ENCODE measurements at regions of chr9 and their contacts with region 1.

Region 1: GRCh38 chr9:86948074-86948929 is 996 bp upstream of the GAS1 start:
- DNase-seq: peak; percentile 82
- ATAC-seq: peak; percentile 38
- H3K4me3 ChIP-seq: peak overlapping the region; percentile 42
- H3K27ac ChIP-seq: peak overlapping the region; percentile 63
- H3K4me1 ChIP-seq: no peaks in the 10 kb centered on the region; the same call in 1 of the 2 replicates
- H3K27me3 ChIP-seq: no peaks in the 10 kb centered on the region; the same call in 1 of the 2 replicates
- CTCF ChIP-seq: peak; percentile 84
- POLR2A ChIP-seq: no peak
- RAD21 ChIP-seq: peak; percentile 78

Region 2: DNA sequence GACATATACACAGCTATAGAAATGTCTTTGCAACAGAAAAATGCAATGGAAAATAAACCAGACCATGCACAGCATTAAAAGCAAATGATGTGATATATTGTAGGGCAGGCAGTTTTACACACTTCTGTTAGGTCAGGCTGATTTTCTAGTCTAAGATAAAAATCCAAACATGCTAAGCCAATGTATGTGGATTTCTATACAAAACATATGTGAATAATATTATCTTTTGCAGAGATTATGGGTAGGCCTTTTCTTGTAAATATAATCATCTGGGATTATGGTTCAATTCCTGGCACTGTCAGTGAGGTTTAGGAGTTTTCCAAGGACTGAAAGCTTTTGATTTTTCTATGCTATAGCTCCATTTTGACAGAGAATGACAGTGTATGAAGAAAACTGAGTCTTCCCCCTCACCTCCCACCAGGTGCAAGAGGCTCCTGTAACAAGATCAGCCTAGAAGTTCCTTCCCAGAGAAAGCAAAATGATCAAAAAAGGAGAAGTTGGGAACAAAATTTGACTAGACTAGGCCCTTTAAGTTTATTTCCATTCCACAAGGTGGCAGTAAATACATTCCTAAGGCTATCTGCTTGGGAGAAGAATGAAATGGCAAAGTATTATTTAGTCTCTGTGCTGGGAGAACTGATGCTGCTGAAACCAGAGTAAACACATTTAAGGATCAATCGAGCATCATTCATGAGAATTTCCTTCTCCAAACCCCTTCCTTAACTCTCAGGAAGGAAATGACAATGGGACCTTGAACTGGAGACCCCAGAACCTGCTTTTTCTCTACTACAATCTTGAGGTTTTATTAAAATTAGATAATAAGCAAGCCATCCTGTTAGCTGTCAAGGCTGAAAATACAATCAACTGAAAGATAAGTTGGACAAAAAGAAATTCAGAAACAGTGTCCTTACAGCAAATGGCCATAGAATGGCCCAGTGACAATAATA is 461.1 kb before region 1 on chr9:
- CTCF ChIA-PET with region 1: interaction called, 13 read pairs
- POLR2A ChIA-PET with region 1: interaction called, 4 read pairs
- dilution Hi-C with region 1: no loop called
- in situ Hi-C with region 1: loop called (anchors 5 kb)
- intact Hi-C with region 1: loop called (anchors 1 kb)
- DNase-seq: peak; percentile 76
- ATAC-seq: peak; percentile 85
- H3K4me3 ChIP-seq: no peak overlapping the region
- H3K27ac ChIP-seq: no peak overlapping the region
- H3K4me1 ChIP-seq: peaks cover 5% of the 10 kb centered on the region; the same call in 1 of the 2 replicates
- H3K27me3 ChIP-seq: no peaks in the 10 kb centered on the region
- CTCF ChIP-seq: peak; percentile 90
- POLR2A ChIP-seq: peak; percentile 36; the same call in 1 of the 2 replicates
- RAD21 ChIP-seq: peak; percentile 98

Region 3: GRCh38 chr9:86637515-86637914 is 310.8 kb before region 1 on chr9:
- CTCF ChIA-PET with region 1: interaction called, 3 read pairs
- POLR2A ChIA-PET with region 1: no interaction called
- dilution Hi-C with region 1: no loop called
- in situ Hi-C with region 1: loop called (anchors 25 kb)
- intact Hi-C with region 1: loop called (anchors 2 kb)
- DNase-seq: peak; percentile 39
- ATAC-seq: peak; percentile 62
- H3K4me3 ChIP-seq: no peak overlapping the region
- H3K27ac ChIP-seq: no peak overlapping the region
- H3K4me1 ChIP-seq: no peaks in the 10 kb centered on the region; the same call in 1 of the 2 replicates
- H3K27me3 ChIP-seq: 0 out of 2 replicates have a peak, but pooled peaks cover 2% of the 10 kb centered on the region
- CTCF ChIP-seq: peak; percentile 62
- POLR2A ChIP-seq: no peak
- RAD21 ChIP-seq: peak; percentile 83

Region 4: DNA sequence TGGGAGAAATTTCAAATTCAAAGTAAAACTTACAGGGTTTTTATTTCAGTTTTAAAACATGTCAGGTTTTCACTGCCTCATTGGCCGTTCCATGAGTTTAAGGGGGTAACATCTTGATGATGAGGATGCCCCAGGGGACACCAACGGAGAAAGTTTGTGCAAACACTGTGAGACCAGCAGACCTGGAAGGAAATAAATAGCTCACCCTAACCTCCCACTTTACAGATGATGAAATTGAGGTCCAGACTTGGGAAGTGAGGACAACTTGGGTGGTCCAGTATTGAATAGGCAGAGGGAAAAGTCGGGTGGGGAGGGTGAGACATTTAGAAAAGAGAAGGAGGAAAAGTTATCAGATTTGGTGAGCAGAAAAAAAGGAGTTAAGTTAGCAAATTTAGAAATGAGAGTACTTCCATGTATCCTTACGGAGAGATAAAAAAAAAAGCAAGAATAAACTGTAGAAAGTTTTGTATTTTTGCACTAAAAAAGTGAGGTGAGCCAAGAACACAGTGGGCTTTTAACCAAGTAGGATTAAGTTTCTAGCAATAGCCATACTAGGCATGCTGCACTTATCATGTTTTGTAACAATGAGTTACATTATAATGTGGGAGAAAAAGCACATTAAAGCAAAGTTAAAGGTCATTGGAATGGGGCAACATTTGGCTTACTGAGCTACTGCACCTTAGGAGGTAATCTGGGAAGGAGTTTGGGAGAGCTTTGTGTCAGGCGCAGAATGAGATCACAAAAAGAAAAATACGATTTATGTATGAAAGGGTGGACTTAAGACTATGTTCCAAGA is 126.1 kb before region 1 on chr9:
- CTCF ChIA-PET with region 1: no interaction called
- POLR2A ChIA-PET with region 1: interaction called, 14 read pairs
- dilution Hi-C with region 1: no loop called
- in situ Hi-C with region 1: no loop called
- intact Hi-C with region 1: no loop called
- DNase-seq: no peak
- ATAC-seq: no peak
- H3K4me3 ChIP-seq: no peak overlapping the region
- H3K27ac ChIP-seq: peak overlapping the region; percentile 64; the same call in 1 of the 2 replicates
- H3K4me1 ChIP-seq: peaks cover 9% of the 10 kb centered on the region
- H3K27me3 ChIP-seq: peaks cover 8% of the 10 kb centered on the region
- CTCF ChIP-seq: no peak
- POLR2A ChIP-seq: no peak
- RAD21 ChIP-seq: no peak

Region 5: DNA sequence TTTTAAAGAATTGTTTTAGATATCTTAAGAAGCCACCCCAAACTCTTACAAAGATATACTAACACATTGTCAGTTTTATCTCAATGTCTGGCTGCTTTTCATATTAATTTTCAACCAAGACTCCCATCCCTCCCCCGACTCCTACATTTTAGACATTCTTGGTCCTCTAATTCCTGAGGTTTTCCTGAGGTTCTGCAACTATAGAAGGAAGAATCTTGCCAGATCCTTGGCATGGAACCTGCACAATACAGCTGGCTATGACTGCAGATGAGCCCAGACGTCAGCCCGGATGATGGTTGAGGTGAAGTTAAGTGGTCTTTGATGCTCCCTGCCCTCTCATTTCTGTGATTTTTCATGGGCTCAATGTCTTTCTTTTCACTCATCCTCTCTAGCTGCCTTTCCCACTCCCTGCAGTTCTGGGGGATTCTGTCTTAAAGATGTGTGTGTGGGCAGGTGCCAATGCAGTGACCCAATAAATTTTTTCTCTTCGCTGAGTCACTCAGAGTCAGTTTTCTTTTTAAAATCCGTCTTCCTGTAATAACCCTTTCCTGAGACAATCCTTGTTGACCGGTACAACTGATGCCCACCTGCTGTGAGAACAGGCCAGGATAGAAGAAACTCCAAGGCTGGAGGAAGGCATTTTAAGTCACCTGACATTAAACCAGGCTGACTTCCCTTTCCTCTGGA is 236.8 kb after region 1 on chr9:
- CTCF ChIA-PET with region 1: no interaction called
- POLR2A ChIA-PET with region 1: no interaction called
- dilution Hi-C with region 1: no loop called
- in situ Hi-C with region 1: no loop called
- intact Hi-C with region 1: loop called (anchors 2 kb)
- DNase-seq: peak; percentile 37
- ATAC-seq: no peak; the same call in 1 of the 2 replicates
- H3K4me3 ChIP-seq: no peak overlapping the region
- H3K27ac ChIP-seq: no peak overlapping the region
- H3K4me1 ChIP-seq: peaks cover 11% of the 10 kb centered on the region
- H3K27me3 ChIP-seq: no peaks in the 10 kb centered on the region
- CTCF ChIP-seq: no peak
- POLR2A ChIP-seq: no peak
- RAD21 ChIP-seq: no peak

Region 6: DNA sequence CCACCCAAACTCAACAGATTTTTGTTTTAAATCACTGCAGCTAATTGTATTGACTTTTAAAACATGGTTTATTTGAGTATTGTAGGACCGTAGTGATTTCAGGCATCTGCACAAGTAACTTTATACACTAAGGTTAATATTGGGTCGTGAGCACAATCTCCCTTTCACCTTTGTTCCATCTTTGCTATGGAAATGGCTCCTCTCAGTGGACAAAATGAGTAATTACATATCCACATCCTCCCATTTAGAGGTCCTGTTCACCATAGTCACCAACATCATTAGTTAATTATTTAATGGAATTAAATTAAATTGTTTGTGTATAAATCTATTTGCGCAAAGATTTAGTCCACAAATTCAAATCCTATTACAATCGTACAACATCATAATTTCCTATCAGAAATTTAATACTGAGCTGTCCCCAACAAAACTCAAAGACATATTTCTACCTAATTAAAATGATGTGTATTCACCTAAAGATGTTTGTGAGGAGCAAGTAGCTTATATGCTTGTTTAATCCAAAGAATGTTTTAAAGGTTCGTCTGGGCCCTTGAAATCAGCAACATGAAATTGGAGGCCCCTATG is 376.4 kb after region 1 on chr9:
- CTCF ChIA-PET with region 1: interaction called, 5 read pairs
- POLR2A ChIA-PET with region 1: no interaction called
- dilution Hi-C with region 1: no loop called
- in situ Hi-C with region 1: loop called (anchors 10 kb)
- intact Hi-C with region 1: loop called (anchors 1 kb)
- DNase-seq: peak; percentile 68
- ATAC-seq: peak; percentile 91
- H3K4me3 ChIP-seq: no peak overlapping the region
- H3K27ac ChIP-seq: no peak overlapping the region
- H3K4me1 ChIP-seq: no peaks in the 10 kb centered on the region
- H3K27me3 ChIP-seq: 0 out of 2 replicates have a peak, but pooled peaks cover 2% of the 10 kb centered on the region
- CTCF ChIP-seq: peak; percentile 85
- POLR2A ChIP-seq: 0 out of 2 replicates have a peak, but pooled peaks have one; percentile 39
- RAD21 ChIP-seq: peak; percentile 98

Measured in IMR-90 (cell line).